ENCODE measurements at regions of chr5 and their contacts with region 1.

Region 1: DNA sequence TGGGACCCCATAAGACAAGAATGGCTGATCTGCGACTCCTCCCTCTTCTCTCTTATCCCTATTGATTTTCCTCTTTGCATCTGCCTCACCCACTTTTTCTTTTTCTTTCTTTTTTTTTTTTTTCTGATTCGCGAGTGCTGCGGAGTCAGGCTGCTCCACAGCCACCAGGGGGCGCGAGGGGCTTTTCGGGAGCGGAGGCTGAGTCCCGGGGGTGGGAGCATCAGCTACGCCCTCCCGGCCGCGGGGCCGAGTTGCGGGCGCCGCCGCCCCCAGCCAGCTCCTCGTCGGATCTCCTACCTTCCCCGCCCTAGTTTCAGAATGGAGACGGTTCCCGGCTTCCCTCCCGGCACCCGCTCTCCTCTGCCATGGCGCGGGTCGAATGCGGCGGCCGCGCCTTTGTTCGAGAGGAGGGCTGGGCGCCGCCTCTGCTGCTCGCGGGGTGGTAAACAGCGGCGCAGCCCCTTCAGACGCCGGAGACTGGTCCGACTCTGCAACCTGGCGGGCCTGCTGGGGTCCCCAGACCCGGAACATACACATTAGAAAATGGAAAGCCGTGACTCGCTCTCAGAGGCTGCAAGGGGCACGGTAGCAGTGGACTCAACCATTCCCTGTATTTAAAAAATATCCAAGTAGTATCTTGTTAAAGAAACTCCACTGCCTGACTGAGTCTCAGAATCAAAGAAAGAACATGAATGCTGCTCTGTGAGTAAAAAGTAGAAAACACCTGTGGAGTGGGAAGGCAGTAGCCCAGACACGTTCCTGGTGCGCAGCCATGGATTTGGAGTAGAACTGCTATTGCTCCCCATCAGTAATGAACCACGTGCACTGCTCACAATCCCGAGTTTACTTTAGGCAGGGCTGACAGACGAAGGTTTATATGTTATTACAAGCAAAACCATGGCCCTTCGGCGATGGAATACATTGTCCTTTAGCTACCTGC is 55.7 kb downstream of the DPYSL3 start:
- DNase-seq: peak; percentile 92
- H3K4me3 ChIP-seq: peak overlapping the region; percentile 43 to 88 (median 55)
- H3K27ac ChIP-seq: peak overlapping the region; percentile 37
- H3K4me1 ChIP-seq: peaks cover 4% of the 10 kb centered on the region
- H3K27me3 ChIP-seq: no peaks in the 10 kb centered on the region
- CTCF ChIP-seq: peak; percentile 90 to 95
- POLR2A ChIP-seq: no peak

Region 2: GRCh38 chr5:147223948-147224791 is 230.0 kb before region 1 on chr5:
- CTCF ChIA-PET with region 1: no interaction called
- POLR2A ChIA-PET with region 1: no interaction called
- dilution Hi-C with region 1: no loop called
- intact Hi-C with region 1: loop called (anchors 1 kb)
- DNase-seq: peak; percentile 60
- H3K4me3 ChIP-seq: no peak overlapping the region
- H3K27ac ChIP-seq: no peak overlapping the region
- H3K4me1 ChIP-seq: no peaks in the 10 kb centered on the region
- H3K27me3 ChIP-seq: peaks cover 4% of the 10 kb centered on the region in 2 experiments
- CTCF ChIP-seq: peak; percentile 44 to 64
- POLR2A ChIP-seq: no peak

Region 3: GRCh38 chr5:147403651-147404640 is 50.2 kb before region 1 on chr5:
- CTCF ChIA-PET with region 1: interaction called, 3 read pairs
- POLR2A ChIA-PET with region 1: no interaction called
- dilution Hi-C with region 1: no loop called
- intact Hi-C with region 1: loop called (anchors 1 kb)
- DNase-seq: peak; percentile 96
- H3K4me3 ChIP-seq: no peak overlapping the region
- H3K27ac ChIP-seq: peak overlapping the region; percentile 95
- H3K4me1 ChIP-seq: peaks cover 25% of the 10 kb centered on the region
- H3K27me3 ChIP-seq: no peaks in the 10 kb centered on the region
- CTCF ChIP-seq: no peak
- POLR2A ChIP-seq: no peak

Region 4: GRCh38 chr5:147509710-147510651 is 55.8 kb after region 1 on chr5 and contains the start of gene DPYSL3:
- CTCF ChIA-PET with region 1: interaction called, 26 read pairs
- POLR2A ChIA-PET with region 1: no interaction called
- dilution Hi-C with region 1: no loop called
- intact Hi-C with region 1: loop called (anchors 1 kb)
- DNase-seq: peak; percentile 90
- H3K4me3 ChIP-seq: peak within 1 kb of the TSS; percentile 46 to 85 (median 79)
- H3K27ac ChIP-seq: peak within 1 kb of the TSS; percentile 67
- H3K4me1 ChIP-seq: peaks cover 26% of the 10 kb centered on the region
- H3K27me3 ChIP-seq: no peaks in the 10 kb centered on the region
- CTCF ChIP-seq: peak; percentile 25 to 55
- POLR2A ChIP-seq: peak; percentile 60
- total RNA-seq, gene DPYSL3: 142 and 146 TPM in 2 replicates

Region 5: GRCh38 chr5:147539053-147539452 is 84.9 kb after region 1 on chr5:
- CTCF ChIA-PET with region 1: interaction called, 11 read pairs
- POLR2A ChIA-PET with region 1: no interaction called
- dilution Hi-C with region 1: no loop called
- intact Hi-C with region 1: loop called (anchors 1 kb)
- DNase-seq: peak; percentile 53
- H3K4me3 ChIP-seq: no peak overlapping the region
- H3K27ac ChIP-seq: no peak overlapping the region
- H3K4me1 ChIP-seq: peaks cover 33% of the 10 kb centered on the region
- H3K27me3 ChIP-seq: no peaks in the 10 kb centered on the region
- CTCF ChIP-seq: no peak
- POLR2A ChIP-seq: no peak

Measured in endothelial cell of umbilical vein (primary cell).